Activated CD4-positive, alpha-beta T cell treated with anti-CD3 and anti-CD28 coated beads, Interleukin-2, amount 10 ng/mL, durations not matched to agents 24 days and 14 days (primary cell): ENCODE measurements at regions of chr17 and their contacts with region 1.

Region 1: DNA sequence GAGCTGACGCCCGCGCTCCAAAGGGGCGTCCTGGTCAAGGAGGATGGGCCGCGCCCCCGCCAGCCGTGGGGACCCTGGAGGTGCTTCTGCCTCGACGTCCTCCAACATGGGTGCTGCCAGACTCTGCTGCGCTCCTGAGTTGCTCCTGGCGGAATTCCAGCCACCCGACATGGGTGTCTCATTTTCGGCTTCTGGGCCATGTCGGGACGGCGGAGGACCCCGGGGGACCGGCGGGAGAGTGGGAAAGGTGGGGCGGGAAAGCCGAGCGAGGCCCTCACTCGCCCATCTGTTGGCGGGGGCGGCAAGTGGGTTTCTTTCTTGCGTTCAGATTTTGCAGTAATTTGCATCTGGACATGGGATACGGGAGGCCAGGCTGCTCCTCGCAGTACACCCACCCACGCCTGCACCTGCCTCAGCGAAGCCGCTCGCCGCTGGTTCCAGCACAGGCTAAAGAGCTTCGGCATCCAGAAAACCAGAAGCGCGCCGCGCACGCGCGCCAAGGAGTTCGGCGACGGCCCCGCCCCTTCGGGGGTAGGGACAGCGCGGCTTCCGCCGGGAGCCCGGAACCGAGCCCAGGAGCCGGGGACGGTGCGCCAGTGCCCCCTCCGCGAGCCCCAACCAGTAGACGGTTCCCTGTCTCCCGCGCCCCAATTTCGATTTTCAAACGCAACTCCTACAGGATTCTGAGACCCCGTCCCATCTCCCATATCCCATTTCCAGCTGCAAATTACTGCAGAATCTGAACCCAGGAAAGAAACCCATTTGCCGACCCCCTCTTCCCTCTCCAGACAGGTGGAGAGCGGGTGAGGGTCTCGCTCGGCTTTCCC is at the start of gene ARMC7:
- DNase-seq: peak; percentile 99
- H3K4me3 Mint-ChIP-seq: peak within 1 kb of the TSS; percentile 94
- H3K27ac Mint-ChIP-seq: peak within 1 kb of the TSS; percentile 83
- H3K4me1 Mint-ChIP-seq: peaks cover 31% of the 10 kb centered on the region
- H3K27me3 Mint-ChIP-seq: no peaks in the 10 kb centered on the region
- total RNA-seq, gene ARMC7: 11.2 and 12.0 TPM in 2 replicates

Region 2: DNA sequence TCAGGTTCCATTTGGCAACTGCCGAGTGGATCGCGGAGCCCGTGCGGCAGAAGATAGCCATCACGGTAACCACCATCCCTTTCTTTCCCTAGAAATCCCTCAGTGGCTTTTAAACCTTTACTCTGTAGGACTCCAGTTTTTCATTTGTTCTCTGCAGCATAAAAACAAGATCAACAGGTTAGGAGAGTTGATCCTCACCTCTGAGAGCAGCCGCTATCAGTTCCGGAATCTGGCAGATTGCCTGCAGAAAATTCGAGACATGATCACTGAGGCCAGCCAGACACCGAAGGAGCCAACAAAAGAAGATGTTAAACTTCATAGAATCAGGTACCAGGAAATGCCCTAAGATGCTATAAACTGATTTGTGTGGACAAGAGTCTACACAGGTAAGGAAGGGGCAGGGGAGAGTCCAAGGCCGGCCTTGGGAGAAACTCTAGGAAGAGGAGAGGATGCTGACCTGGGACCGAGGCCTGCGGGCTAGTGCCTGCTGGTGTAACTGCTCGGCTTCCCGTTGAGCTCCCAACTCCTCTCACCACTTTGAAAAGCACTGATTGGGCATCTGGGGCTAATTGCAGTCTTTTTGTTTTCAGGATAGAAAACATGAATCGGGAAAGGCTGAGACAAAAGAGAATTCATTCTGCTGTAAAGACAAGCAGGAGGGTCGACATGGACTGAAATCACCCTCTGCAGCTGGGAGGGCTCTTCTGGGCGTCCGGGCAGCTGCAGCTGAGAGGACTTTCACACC is 89.1 kb before region 1 on chr17:
- intact Hi-C with region 1: no loop called
- DNase-seq: no peak
- H3K4me3 Mint-ChIP-seq: no peak overlapping the region
- H3K27ac Mint-ChIP-seq: no peak overlapping the region
- H3K4me1 Mint-ChIP-seq: peaks cover 8% of the 10 kb centered on the region
- H3K27me3 Mint-ChIP-seq: no peaks in the 10 kb centered on the region

Region 3: GRCh38 chr17:75046582-75047289 is 62.9 kb before region 1 on chr17 and contains the starts of genes ATP5PD and KCTD2:
- intact Hi-C with region 1: loop called (anchors 2 kb)
- DNase-seq: peak; percentile 98
- H3K4me3 Mint-ChIP-seq: peak within 1 kb of the TSS; percentile 99
- H3K27ac Mint-ChIP-seq: peak within 1 kb of the TSS; percentile 95
- H3K4me1 Mint-ChIP-seq: peaks cover 29% of the 10 kb centered on the region
- H3K27me3 Mint-ChIP-seq: no peaks in the 10 kb centered on the region
- total RNA-seq, gene ATP5PD: 158 and 161 TPM in 2 replicates
- total RNA-seq, gene KCTD2: 18.7 and 19.0 TPM in 2 replicates

Region 4: DNA sequence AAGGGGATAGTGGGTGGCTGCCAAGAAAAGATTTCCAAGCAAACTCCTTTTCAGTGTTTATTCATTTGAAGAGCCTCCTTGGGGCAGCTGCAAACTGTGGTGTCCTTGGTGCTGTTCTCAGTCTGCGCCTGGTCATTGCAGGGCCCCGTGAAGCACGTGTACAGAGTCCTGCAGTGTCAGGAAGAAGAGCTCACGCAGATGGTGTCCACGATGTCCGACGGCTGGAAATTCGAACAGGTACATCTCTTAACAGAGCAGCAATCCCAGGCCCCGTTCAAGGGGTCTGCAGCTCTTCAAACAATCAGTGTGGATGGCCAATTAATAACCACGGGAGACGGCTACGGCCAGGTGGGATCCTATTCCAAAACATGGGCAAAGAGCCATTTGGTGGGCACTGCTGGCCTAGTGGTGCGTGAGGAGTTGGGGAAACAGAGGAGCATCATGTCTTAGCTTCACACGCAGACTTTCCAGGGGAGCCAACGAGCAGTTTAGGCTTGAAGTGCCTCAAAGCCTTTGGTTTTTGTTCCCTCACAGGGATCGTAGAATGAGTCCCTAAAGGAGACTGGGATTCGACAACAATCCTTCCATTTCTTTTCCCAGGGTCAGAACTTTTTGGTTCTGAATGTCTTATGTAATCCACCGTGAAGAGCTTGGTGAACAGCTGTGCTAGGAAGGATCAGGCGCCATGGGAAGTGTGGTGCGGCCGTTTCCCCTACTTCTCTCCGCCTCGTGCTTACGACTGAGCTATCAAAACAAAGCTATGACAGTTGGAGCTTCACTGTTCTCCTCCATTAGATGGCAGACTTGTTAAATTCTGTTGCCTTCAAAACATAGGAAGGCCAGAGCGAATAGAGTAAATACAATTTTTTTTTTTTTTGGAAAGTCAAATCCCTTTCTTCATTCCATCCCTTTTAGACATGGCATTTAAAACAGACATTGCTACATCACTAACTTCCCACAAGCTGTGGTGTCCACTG is 50.0 kb before region 1 on chr17:
- intact Hi-C with region 1: no loop called
- DNase-seq: no peak
- H3K4me3 Mint-ChIP-seq: no peak overlapping the region
- H3K27ac Mint-ChIP-seq: peak overlapping the region; percentile 65
- H3K4me1 Mint-ChIP-seq: peaks cover 9% of the 10 kb centered on the region
- H3K27me3 Mint-ChIP-seq: no peaks in the 10 kb centered on the region

Region 5: GRCh38 chr17:75131280-75132017 is 21.8 kb after region 1 on chr17 and contains the start of gene NT5C:
- intact Hi-C with region 1: loop called (anchors 2 kb)
- DNase-seq: peak; percentile 92
- H3K4me3 Mint-ChIP-seq: peak within 1 kb of the TSS; percentile 91
- H3K27ac Mint-ChIP-seq: peak within 1 kb of the TSS; percentile 88
- H3K4me1 Mint-ChIP-seq: peaks cover 19% of the 10 kb centered on the region
- H3K27me3 Mint-ChIP-seq: no peaks in the 10 kb centered on the region
- total RNA-seq, gene NT5C: 76.5 and 84.7 TPM in 2 replicates

Region 6: DNA sequence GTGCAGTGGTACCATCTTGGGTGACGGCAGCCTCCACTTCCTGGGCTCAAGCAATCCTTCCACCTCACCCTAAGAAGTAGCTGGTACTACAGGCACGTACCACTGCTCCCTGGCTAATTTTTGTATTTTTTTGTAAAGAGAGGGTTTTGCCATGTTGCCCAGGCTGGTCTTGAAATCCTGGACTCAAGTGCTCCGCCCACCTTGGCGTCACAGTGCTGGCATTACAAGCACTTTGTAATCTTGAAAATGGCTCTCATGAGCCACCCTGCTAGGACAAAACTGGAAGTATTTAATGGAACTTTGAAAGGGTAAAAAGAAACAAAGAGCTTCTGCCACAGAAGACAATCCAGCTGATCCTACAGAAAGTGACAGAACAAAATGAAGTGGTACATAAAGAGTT is 63.9 kb after region 1 on chr17:
- intact Hi-C with region 1: loop called (anchors 2 kb)
- DNase-seq: no peak
- H3K4me3 Mint-ChIP-seq: no peak overlapping the region
- H3K27ac Mint-ChIP-seq: peak overlapping the region; percentile 12
- H3K4me1 Mint-ChIP-seq: peaks cover 17% of the 10 kb centered on the region
- H3K27me3 Mint-ChIP-seq: no peaks in the 10 kb centered on the region